Activated B cell treated with CpG ODN at 0.5 μM for 24 hours (primary cell): ENCODE measurements at regions of chr2 and their contacts with region 1.

Region 1: GRCh38 chr2:13006829-13007717 is 290.3 kb downstream of the TRIB2 start:
- DNase-seq: peak; percentile 21
- ATAC-seq: peak; percentile 65
- H3K4me3 Mint-ChIP-seq: no peak overlapping the region
- H3K27ac Mint-ChIP-seq: no peak overlapping the region
- H3K4me1 Mint-ChIP-seq: peaks cover 3% of the 10 kb centered on the region
- H3K27me3 Mint-ChIP-seq: peaks cover 17% of the 10 kb centered on the region
- CTCF ChIP-seq: peak; percentile 30

Region 2: GRCh38 chr2:11589316-11589940 is 1417.6 kb before region 1 on chr2:
- CTCF ChIA-PET with region 1: no interaction called
- POLR2A ChIA-PET with region 1: no interaction called
- intact Hi-C with region 1: loop called (anchors 5 kb)
- DNase-seq: no peak
- ATAC-seq: no peak
- H3K4me3 Mint-ChIP-seq: no peak overlapping the region
- H3K27ac Mint-ChIP-seq: no peak overlapping the region
- H3K4me1 Mint-ChIP-seq: no peaks in the 10 kb centered on the region
- H3K27me3 Mint-ChIP-seq: peaks cover 5% of the 10 kb centered on the region
- CTCF ChIP-seq: no peak

Region 3: DNA sequence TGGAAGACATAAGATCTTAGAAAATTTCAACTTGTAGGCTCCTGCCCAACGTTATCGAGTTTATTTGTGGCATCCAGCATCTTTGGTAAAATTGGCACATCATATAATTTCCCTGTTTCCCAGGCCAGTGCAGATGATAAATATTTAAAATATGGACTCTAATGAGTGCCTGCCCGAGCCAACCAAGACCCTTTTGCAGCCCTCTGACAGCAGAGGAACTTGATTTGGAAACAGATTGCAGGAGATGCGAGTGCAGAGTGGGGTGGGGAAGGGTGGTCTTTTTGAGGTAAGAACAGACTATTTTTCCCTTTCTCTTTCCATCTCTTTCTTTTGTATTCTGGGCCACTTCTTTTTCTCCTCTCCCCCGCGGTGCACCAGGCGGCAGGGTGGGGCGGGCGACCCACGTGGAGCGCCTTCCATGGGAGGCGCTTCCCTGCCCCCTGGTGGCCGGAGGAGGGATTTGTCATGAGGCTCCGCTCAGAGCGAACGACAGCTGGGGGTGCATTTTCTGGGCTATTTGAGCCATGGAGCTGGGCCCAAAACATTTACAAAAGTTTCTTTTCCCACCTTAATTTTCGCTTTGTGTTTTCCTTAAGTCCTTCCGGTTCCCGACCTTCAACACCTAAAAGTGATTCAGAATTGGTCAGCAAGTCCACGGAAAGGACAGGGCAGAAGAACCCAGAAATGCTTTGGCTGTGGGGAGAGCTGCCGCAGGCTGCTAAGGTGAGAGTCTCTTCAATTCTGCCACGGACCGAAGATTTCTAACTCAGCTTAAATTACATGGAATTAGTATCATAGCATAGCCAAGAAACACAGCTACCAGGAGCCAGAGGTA is 1227.9 kb before region 1 on chr2:
- CTCF ChIA-PET with region 1: interaction called, 12 read pairs
- POLR2A ChIA-PET with region 1: no interaction called
- intact Hi-C with region 1: loop called (anchors 1 kb)
- DNase-seq: peak; percentile 79
- ATAC-seq: peak; percentile 94
- H3K4me3 Mint-ChIP-seq: peak overlapping the region; percentile 52
- H3K27ac Mint-ChIP-seq: no peak overlapping the region
- H3K4me1 Mint-ChIP-seq: peaks cover 32% of the 10 kb centered on the region
- H3K27me3 Mint-ChIP-seq: no peaks in the 10 kb centered on the region
- CTCF ChIP-seq: peak; percentile 1

Region 4: GRCh38 chr2:11863513-11864328 is 1143.4 kb before region 1 on chr2:
- CTCF ChIA-PET with region 1: interaction called, 14 read pairs
- POLR2A ChIA-PET with region 1: no interaction called
- intact Hi-C with region 1: loop called (anchors 1 kb)
- DNase-seq: peak; percentile 41
- ATAC-seq: peak; percentile 65
- H3K4me3 Mint-ChIP-seq: peak overlapping the region; percentile 47
- H3K27ac Mint-ChIP-seq: peak overlapping the region; percentile 41
- H3K4me1 Mint-ChIP-seq: peaks cover 92% of the 10 kb centered on the region
- H3K27me3 Mint-ChIP-seq: no peaks in the 10 kb centered on the region
- CTCF ChIP-seq: peak; percentile 85

Region 5: GRCh38 chr2:12326449-12327190 is 680.5 kb before region 1 on chr2:
- CTCF ChIA-PET with region 1: no interaction called
- POLR2A ChIA-PET with region 1: no interaction called
- intact Hi-C with region 1: loop called (anchors 2 kb)
- DNase-seq: no peak
- ATAC-seq: no peak
- H3K4me3 Mint-ChIP-seq: no peak overlapping the region
- H3K27ac Mint-ChIP-seq: no peak overlapping the region
- H3K4me1 Mint-ChIP-seq: peaks cover 26% of the 10 kb centered on the region
- H3K27me3 Mint-ChIP-seq: no peaks in the 10 kb centered on the region
- CTCF ChIP-seq: no peak

Region 6: DNA sequence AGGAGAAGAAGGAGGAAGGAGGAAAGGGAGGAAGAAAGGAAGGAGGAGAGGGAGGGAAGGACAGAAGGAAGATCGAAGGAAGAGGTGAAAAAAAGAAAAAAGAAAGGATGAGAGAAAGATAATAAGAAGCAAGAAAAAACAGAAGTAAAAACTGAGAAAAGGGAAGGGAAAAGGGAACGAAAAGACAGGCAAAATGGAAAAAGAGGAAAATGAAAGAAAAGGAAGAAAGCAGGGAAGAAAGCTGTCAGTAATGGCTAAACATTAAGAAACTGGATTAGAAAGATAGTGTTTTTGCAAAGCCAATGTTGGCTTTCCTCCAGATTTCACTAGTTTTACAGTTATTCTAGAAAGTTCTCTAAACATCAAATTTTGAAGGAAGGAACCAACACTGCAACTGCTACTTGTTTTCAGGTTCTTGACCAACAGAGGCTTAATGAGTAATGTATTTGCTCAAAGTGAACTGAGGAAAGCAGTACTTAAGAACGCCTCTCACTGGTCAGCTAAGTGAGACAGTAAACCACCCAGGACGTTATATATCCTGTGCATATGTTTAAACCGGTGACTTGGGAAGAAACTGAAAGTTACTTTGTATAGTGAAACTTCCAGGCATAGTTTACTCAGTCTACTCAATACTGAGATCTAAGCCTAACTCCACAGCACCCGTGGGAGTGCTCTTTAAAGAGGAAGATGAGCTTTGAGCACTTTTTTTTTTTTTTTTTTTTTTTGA is 576.5 kb before region 1 on chr2:
- CTCF ChIA-PET with region 1: interaction called, 12 read pairs
- POLR2A ChIA-PET with region 1: no interaction called
- intact Hi-C with region 1: no loop called
- DNase-seq: no peak
- ATAC-seq: peak; percentile 71
- H3K4me3 Mint-ChIP-seq: peak overlapping the region; percentile 40
- H3K27ac Mint-ChIP-seq: no peak overlapping the region
- H3K4me1 Mint-ChIP-seq: peaks cover 15% of the 10 kb centered on the region
- H3K27me3 Mint-ChIP-seq: no peaks in the 10 kb centered on the region
- CTCF ChIP-seq: no peak

Region 7: GRCh38 chr2:12990523-12990922 is 16.6 kb before region 1 on chr2:
- CTCF ChIA-PET with region 1: interaction called, 12 read pairs
- POLR2A ChIA-PET with region 1: no interaction called
- intact Hi-C with region 1: no loop called
- DNase-seq: no peak
- ATAC-seq: no peak
- H3K4me3 Mint-ChIP-seq: no peak overlapping the region
- H3K27ac Mint-ChIP-seq: no peak overlapping the region
- H3K4me1 Mint-ChIP-seq: no peaks in the 10 kb centered on the region
- H3K27me3 Mint-ChIP-seq: peaks cover 12% of the 10 kb centered on the region
- CTCF ChIP-seq: no peak